CD8-positive, alpha-beta T cell (primary cell): ENCODE measurements at regions of chr3 and their contacts with region 1.

Region 1: DNA sequence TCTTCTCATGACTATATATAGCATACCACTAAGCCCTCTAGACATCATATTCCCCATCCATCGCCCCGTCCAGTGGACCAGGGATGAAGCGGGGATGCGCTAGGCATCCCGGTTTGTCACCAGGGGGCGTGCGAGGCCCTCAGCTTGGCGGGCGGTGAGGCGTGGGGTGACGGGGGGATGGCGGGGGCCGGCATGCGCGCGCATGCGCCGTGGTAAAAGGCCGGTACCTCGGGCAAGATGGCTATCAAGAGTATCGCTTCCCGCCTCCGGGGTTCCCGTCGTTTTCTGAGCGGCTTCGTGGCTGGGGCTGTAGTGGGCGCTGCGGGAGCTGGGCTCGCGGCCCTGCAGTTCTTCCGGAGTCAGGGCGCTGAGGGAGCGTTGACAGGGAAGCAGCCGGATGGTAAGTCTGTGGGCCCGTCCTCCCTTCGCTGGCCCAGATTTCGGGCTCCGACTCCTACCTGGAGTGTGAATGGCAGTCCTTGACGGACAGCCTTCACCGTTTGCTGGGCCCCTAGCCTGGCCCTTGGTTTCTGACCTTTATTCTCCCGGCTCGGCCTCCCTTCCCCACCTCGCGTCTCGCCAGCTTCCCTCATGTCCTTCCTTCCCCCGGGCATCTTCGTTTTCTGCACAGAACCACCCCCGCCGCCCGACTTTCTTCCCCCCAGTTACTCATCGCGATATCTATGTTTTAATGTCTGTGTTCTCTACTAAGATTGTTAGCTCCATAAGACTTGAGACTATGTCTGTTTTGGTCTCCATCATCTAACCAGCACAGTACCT is at the start of gene EXOG:
- DNase-seq: peak; percentile 93 to 97 (median 95)
- ATAC-seq: peak; percentile 95
- H3K4me3 ChIP-seq: peak within 1 kb of the TSS; percentile 88 to 96
- H3K4me3 Mint-ChIP-seq: peak within 1 kb of the TSS; percentile 97
- H3K27ac ChIP-seq: peak within 1 kb of the TSS; percentile 66 to 71
- H3K27ac Mint-ChIP-seq: peak within 1 kb of the TSS; percentile 91
- H3K4me1 ChIP-seq: peaks cover 14% of the 10 kb centered on the region
- H3K4me1 Mint-ChIP-seq: peaks cover 32% of the 10 kb centered on the region
- H3K27me3 ChIP-seq: no peaks in the 10 kb centered on the region
- H3K27me3 Mint-ChIP-seq: no peaks in the 10 kb centered on the region
- CTCF ChIP-seq: peak; percentile 92
- total RNA-seq, gene EXOG: 16.5 to 20.1 TPM

Region 2: GRCh38 chr3:38346587-38347410 is 149.5 kb before region 1 on chr3 and contains the start of gene XYLB:
- CTCF ChIA-PET with region 1: interaction called, 17 read pairs
- POLR2A ChIA-PET with region 1: no interaction called
- intact Hi-C with region 1: loop called in 1 of 2 experiments (anchors 5 kb)
- DNase-seq: peak; percentile 43 to 87 (median 71)
- ATAC-seq: peak; percentile 95
- H3K4me3 ChIP-seq: peak within 1 kb of the TSS; percentile 51 to 83
- H3K4me3 Mint-ChIP-seq: peak within 1 kb of the TSS; percentile 85
- H3K27ac ChIP-seq: peak within 1 kb of the TSS in 1 of 2 experiments; percentile 33
- H3K27ac Mint-ChIP-seq: no peak within 1 kb of the TSS
- H3K4me1 ChIP-seq: no peaks in the 10 kb centered on the region
- H3K4me1 Mint-ChIP-seq: peaks cover 3% of the 10 kb centered on the region
- H3K27me3 ChIP-seq: no peaks in the 10 kb centered on the region
- H3K27me3 Mint-ChIP-seq: peaks cover 3% of the 10 kb centered on the region
- CTCF ChIP-seq: peak; percentile 78
- total RNA-seq, gene XYLB: 0.47 to 0.52 TPM

Region 3: GRCh38 chr3:38521391-38521987 is 25.2 kb after region 1 on chr3:
- CTCF ChIA-PET with region 1: interaction called, 85 read pairs
- POLR2A ChIA-PET with region 1: interaction called, 4 read pairs
- intact Hi-C with region 1: loop called (anchors 1 to 2 kb)
- DNase-seq: peak; percentile 24 to 80 (median 65)
- ATAC-seq: peak; percentile 67
- H3K4me3 ChIP-seq: no peak overlapping the region
- H3K4me3 Mint-ChIP-seq: no peak overlapping the region
- H3K27ac ChIP-seq: no peak overlapping the region
- H3K27ac Mint-ChIP-seq: no peak overlapping the region
- H3K4me1 ChIP-seq: peaks cover 30% of the 10 kb centered on the region
- H3K4me1 Mint-ChIP-seq: peaks cover 34% of the 10 kb centered on the region
- H3K27me3 ChIP-seq: no peaks in the 10 kb centered on the region
- H3K27me3 Mint-ChIP-seq: no peaks in the 10 kb centered on the region
- CTCF ChIP-seq: peak; percentile 83

Region 4: GRCh38 chr3:39000008-39000450 is 503.7 kb after region 1 on chr3:
- CTCF ChIA-PET with region 1: interaction called, 5 read pairs
- POLR2A ChIA-PET with region 1: no interaction called
- intact Hi-C with region 1: loop called in 1 of 2 experiments (anchors 2 kb)
- DNase-seq: peak in 2 of 9 experiments; percentile 41 to 56
- ATAC-seq: no peak
- H3K4me3 ChIP-seq: no peak overlapping the region
- H3K4me3 Mint-ChIP-seq: no peak overlapping the region
- H3K27ac ChIP-seq: no peak overlapping the region
- H3K27ac Mint-ChIP-seq: no peak overlapping the region
- H3K4me1 ChIP-seq: no peaks in the 10 kb centered on the region
- H3K4me1 Mint-ChIP-seq: no peaks in the 10 kb centered on the region
- H3K27me3 ChIP-seq: no peaks in the 10 kb centered on the region
- H3K27me3 Mint-ChIP-seq: peaks cover 16% of the 10 kb centered on the region
- CTCF ChIP-seq: peak; percentile 60

Region 5: GRCh38 chr3:39383045-39383880 is 886.9 kb after region 1 on chr3 and contains the start of gene SLC25A38:
- CTCF ChIA-PET with region 1: no interaction called
- POLR2A ChIA-PET with region 1: no interaction called
- intact Hi-C with region 1: loop called in 1 of 2 experiments (anchors 10 kb)
- DNase-seq: peak; percentile 58 to 93 (median 78)
- ATAC-seq: peak; percentile 79
- H3K4me3 ChIP-seq: peak within 1 kb of the TSS; percentile 81 to 98
- H3K4me3 Mint-ChIP-seq: peak within 1 kb of the TSS; percentile 99
- H3K27ac ChIP-seq: peak within 1 kb of the TSS; percentile 91 to 97
- H3K27ac Mint-ChIP-seq: peak within 1 kb of the TSS; percentile 98
- H3K4me1 ChIP-seq: peaks cover 43% of the 10 kb centered on the region
- H3K4me1 Mint-ChIP-seq: peaks cover 50% of the 10 kb centered on the region
- H3K27me3 ChIP-seq: no peaks in the 10 kb centered on the region
- H3K27me3 Mint-ChIP-seq: no peaks in the 10 kb centered on the region
- CTCF ChIP-seq: peak; percentile 39
- total RNA-seq, gene SLC25A38: 64.0 to 65.1 TPM

Region 6: DNA sequence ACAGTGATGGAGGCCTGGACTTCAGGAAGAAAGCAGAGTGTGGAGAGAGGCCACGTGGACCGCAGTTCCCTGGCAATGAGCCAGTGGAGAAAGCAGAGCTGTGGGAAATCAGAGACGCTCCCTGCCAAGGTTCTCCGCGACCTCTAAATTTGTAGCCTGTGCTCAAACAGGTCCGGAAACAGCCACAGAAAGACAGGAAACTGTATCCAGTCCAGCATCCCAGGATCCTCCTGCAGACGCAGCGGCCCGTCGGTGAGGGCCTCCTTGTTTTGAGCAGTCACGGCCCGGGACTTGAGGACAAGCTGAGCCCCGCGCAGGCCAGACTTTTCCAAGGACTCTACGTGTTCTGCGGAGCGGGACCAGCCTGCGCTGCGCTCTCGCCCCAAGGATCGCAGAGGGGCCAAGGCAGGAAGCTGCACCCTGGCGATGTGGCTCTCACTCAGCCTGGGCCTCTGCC is 932.5 kb after region 1 on chr3:
- CTCF ChIA-PET with region 1: no interaction called
- POLR2A ChIA-PET with region 1: no interaction called
- intact Hi-C with region 1: no loop called
- DNase-seq: no peak
- ATAC-seq: no peak
- H3K4me3 ChIP-seq: no peak overlapping the region
- H3K4me3 Mint-ChIP-seq: no peak overlapping the region
- H3K27ac ChIP-seq: no peak overlapping the region
- H3K27ac Mint-ChIP-seq: no peak overlapping the region
- H3K4me1 ChIP-seq: no peaks in the 10 kb centered on the region
- H3K4me1 Mint-ChIP-seq: no peaks in the 10 kb centered on the region
- H3K27me3 ChIP-seq: no peaks in the 10 kb centered on the region
- H3K27me3 Mint-ChIP-seq: peaks cover 9% of the 10 kb centered on the region
- CTCF ChIP-seq: no peak

Region 7: GRCh38 chr3:40073310-40074007 is 1577.1 kb after region 1 on chr3:
- CTCF ChIA-PET with region 1: no interaction called
- POLR2A ChIA-PET with region 1: no interaction called
- intact Hi-C with region 1: no loop called
- DNase-seq: no peak
- ATAC-seq: no peak
- H3K4me3 ChIP-seq: no peak overlapping the region
- H3K4me3 Mint-ChIP-seq: no peak overlapping the region
- H3K27ac ChIP-seq: no peak overlapping the region
- H3K27ac Mint-ChIP-seq: no peak overlapping the region
- H3K4me1 ChIP-seq: no peaks in the 10 kb centered on the region
- H3K4me1 Mint-ChIP-seq: no peaks in the 10 kb centered on the region
- H3K27me3 ChIP-seq: no peaks in the 10 kb centered on the region
- H3K27me3 Mint-ChIP-seq: peaks cover 4% of the 10 kb centered on the region
- CTCF ChIP-seq: no peak